Heart right ventricle (tissue), 16 donors: ENCODE measurements at regions of chr3 and their contacts with region 1.

Region 1: GRCh38 chr3:74643636-74644035 is 29.2 kb upstream of the CNTN3 start:
- DNase-seq: peak; percentile 33 to 70
- ATAC-seq: peak; percentile 81 to 100 (median 100)
- H3K4me3 ChIP-seq: no peak overlapping the region
- H3K27ac ChIP-seq: peak overlapping the region; percentile 31 to 86 (median 70)
- H3K4me1 ChIP-seq: peaks cover 0 to 17% (median 6%) of the 10 kb centered on the region in 9 donors
- H3K27me3 ChIP-seq: no peaks in the 10 kb centered on the region
- CTCF ChIP-seq: no peak

Region 2: GRCh38 chr3:74500257-74500656 is 143.4 kb before region 1 on chr3:
- intact Hi-C with region 1: no loop called
- DNase-seq: no peak
- ATAC-seq: no peak
- H3K4me3 ChIP-seq: no peak overlapping the region
- H3K27ac ChIP-seq: no peak overlapping the region
- H3K4me1 ChIP-seq: no peaks in the 10 kb centered on the region
- H3K27me3 ChIP-seq: no peaks in the 10 kb centered on the region
- CTCF ChIP-seq: no peak

Region 3: GRCh38 chr3:74693696-74694393 is 50.2 kb after region 1 on chr3:
- intact Hi-C with region 1: loop called in 1 of 10 experiments (anchors 2 kb)
- DNase-seq: no peak
- ATAC-seq: peak in 5 of 8 donors; percentile 56 to 89 (median 76)
- H3K4me3 ChIP-seq: no peak overlapping the region
- H3K27ac ChIP-seq: peak overlapping the region in 1 of 10 donors; percentile 63
- H3K4me1 ChIP-seq: peaks cover 0 to 9% (median 0%) of the 10 kb centered on the region in 9 donors
- H3K27me3 ChIP-seq: no peaks in the 10 kb centered on the region
- CTCF ChIP-seq: no peak

Region 4: DNA sequence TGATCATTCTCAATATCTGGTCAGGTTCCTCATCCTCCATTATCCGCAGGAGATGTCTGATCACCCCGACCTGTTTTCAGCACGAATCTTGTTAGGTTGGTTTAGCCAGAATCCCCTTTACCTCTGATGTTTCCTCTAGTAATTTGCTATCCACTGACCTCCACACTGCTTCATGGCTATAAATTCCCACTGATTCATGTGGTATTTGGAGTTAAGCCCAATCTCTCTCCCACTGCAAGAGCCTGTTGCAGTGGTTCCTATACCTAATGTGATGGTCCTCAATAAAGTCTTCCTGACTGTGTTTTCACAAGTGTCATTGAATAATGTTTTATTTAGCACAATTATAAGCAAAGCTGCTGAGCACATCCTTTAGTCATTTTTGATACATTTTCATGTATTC is 95.6 kb after region 1 on chr3:
- intact Hi-C with region 1: loop called in 1 of 10 experiments (anchors 10 kb)
- DNase-seq: no peak
- ATAC-seq: peak in 3 of 8 donors; percentile 73 to 78 (median 74)
- H3K4me3 ChIP-seq: no peak overlapping the region
- H3K27ac ChIP-seq: peak overlapping the region in 2 of 10 donors; percentile 3 to 4
- H3K4me1 ChIP-seq: peaks cover 0 to 5% (median 0%) of the 10 kb centered on the region in 9 donors
- H3K27me3 ChIP-seq: no peaks in the 10 kb centered on the region
- CTCF ChIP-seq: no peak